Sigmoid colon (tissue), 7 donors: ENCODE measurements at regions of chr18 and their contacts with region 1.

Region 1: DNA sequence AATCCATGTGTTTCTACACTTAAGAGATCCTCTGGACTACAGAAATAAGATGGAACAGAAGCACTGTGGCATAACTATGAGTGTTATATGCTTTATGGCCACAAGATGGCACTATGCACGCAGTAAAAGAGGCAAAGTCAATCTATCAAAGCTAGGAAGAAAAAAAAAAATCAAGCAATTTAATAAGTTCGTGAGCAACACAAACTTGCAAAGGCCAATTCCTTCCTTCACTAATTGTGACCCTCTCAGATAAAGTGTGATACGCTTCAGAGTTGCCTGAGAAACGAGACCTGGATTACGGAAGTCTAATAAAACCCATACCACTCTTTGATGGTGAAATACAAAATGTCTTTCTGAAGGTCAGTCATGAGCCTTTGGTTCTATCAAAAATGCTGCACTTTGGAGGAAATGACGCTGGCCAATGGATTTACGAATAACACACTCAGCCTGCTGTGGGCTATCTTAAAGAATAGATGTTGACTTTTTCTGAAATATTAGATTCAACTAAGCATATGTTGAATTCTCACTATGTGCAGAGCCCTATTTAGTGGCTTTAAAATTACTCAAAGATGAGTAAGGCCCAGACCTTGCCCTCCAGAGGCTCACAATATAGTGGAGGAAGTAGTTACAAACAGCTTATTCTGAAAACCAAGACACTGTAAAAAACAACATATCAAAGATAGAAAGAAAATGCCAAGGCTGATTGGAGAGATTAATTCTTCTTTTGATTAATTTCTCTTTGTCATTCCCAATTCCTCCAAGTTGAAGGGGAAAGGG is 35.5 kb upstream of the TTR start:
- DNase-seq: no peak
- H3K4me3 ChIP-seq: no peak overlapping the region
- H3K27ac ChIP-seq: no peak overlapping the region
- H3K4me1 ChIP-seq: no peaks in the 10 kb centered on the region
- H3K27me3 ChIP-seq: no peaks in the 10 kb centered on the region
- CTCF ChIP-seq: peak; percentile 37 to 75 (median 51)
- EP300 ChIP-seq: no peak
- POLR2A ChIP-seq: no peak

Region 2: DNA sequence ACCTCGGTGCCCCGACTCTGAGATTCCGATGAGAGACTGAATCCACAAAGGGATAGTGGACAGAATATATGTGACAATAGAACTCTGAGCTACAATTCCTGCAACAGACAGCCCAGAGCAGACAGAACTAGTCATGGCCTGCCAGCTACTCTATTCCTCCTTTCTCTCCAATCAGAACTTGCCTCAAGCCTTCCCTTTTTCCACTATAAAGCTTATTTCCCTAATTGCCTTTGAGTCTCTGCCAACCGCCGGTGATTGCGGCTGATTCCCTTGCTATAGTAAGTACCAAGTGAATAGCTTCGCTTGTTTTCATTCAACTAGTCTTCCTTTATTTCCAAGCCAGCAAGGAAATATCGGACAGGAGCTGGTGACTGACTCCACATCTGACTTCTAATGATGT is 610.4 kb before region 1 on chr18:
- intact Hi-C with region 1: no loop called
- DNase-seq: no peak
- H3K4me3 ChIP-seq: no peak overlapping the region
- H3K27ac ChIP-seq: no peak overlapping the region
- H3K4me1 ChIP-seq: no peaks in the 10 kb centered on the region
- H3K27me3 ChIP-seq: no peaks in the 10 kb centered on the region
- CTCF ChIP-seq: no peak
- EP300 ChIP-seq: no peak
- POLR2A ChIP-seq: no peak

Region 3: DNA sequence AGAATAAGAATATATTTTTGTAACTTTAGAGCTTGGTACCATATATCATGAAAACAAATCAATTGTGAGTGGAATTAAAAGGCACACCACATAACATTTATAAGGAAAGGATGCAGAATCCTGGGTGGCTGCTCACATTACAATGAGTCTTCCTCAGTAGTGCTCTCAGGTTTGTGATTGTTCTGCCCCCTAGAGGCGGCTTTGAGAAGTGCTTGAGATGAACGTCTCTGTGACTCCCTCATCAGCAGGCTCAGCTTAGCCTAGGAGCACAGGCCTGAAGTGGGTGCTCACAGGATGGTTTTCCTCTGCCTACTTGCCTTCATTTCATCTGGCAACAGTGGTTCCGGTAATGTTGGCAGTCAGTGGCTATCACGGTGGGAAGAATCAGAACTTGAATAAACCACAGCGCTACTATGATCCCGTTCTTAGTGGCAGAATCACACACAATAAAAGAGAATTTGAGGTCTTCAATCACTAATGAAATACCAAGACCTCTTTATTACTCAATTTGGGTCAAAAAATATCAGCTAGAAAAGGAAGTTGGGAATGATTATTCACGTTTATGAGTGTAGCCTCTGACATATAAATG is 166.3 kb after region 1 on chr18:
- intact Hi-C with region 1: loop called (anchors 2 kb)
- DNase-seq: peak; percentile 84
- H3K4me3 ChIP-seq: no peak overlapping the region
- H3K27ac ChIP-seq: no peak overlapping the region
- H3K4me1 ChIP-seq: peaks cover 0 to 15% (median 5%) of the 10 kb centered on the region in 4 donors
- H3K27me3 ChIP-seq: no peaks in the 10 kb centered on the region
- CTCF ChIP-seq: peak; percentile 20 to 82 (median 60)
- EP300 ChIP-seq: no peak
- POLR2A ChIP-seq: no peak

Region 4: DNA sequence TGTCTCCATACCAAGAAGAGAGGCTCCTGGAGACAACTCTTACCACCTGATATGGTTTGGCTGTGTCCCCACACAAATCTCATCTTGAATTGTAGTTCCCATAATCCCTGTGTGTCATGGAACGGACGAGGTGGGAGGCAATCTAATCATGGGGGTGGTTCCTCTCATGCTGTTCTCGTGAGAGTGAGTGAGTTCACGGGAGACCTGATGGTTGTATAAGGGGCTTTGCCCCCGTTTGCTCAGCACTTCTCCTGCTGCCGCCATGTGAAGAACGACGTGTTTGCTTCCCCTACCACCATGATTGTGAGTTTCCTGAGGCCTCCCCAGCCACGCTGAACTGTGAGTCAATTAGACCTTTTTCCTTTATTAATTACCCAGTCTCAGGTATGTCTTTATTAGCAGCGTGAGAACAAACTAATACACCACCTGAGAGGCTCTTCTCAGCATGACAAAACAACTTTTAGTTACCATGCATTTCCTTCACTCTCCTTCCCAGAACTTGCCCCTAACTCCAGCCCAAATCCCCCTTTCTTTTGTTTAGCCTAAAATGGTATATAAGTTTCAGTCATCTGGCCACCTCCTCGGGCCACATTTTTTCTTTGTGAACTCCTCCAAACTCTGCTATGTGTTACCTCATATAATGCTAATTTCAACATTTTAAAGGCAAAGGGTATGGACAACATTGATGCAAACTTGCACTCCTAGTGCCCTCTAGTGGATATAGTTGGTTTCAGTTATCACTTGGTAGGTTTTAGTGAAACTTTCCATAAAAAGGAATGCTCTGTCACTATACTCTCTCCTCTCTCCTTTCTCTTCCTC is 263.2 kb after region 1 on chr18:
- intact Hi-C with region 1: loop called (anchors 5 kb)
- DNase-seq: no peak
- H3K4me3 ChIP-seq: no peak overlapping the region
- H3K27ac ChIP-seq: no peak overlapping the region
- H3K4me1 ChIP-seq: no peaks in the 10 kb centered on the region
- H3K27me3 ChIP-seq: no peaks in the 10 kb centered on the region
- CTCF ChIP-seq: peak in 3 of 4 experiments; percentile 24 to 60 (median 55)
- EP300 ChIP-seq: no peak
- POLR2A ChIP-seq: no peak

Region 5: DNA sequence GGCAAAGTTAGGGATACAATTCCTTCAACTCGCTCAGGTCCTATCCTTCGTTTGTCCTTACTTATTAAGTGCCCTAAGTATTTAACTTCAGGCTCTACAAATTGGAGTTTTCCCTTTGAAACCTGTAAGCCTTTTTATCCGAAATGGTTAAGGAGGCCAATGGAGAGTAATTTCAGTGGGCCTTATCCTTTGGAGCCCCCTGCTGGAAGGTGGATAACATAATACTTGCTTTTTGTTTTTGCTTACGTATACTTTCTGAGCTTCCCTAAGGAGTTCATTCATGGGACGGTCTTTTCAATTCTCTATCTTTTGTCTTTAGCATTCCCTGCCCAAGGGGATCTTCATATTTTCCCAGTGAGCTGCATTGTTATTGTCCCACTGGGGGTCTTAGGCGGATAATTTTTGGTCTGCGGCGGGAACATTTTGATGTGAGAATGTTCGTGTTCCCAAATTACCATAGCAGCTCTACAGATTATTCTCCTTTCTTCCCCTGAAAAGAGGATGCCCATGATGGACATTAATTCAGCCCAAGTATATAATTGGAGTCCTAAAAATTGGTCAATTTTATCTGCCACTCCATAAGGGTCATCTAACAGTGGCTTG is 421.2 kb after region 1 on chr18:
- intact Hi-C with region 1: loop called (anchors 10 kb)
- DNase-seq: no peak
- H3K4me3 ChIP-seq: no peak overlapping the region
- H3K27ac ChIP-seq: no peak overlapping the region
- H3K4me1 ChIP-seq: no peaks in the 10 kb centered on the region
- H3K27me3 ChIP-seq: no peaks in the 10 kb centered on the region
- CTCF ChIP-seq: peak in 3 of 4 experiments; percentile 13 to 56 (median 40)
- EP300 ChIP-seq: no peak
- POLR2A ChIP-seq: no peak